SK-N-SH (cell line): ENCODE measurements at regions of chr5 and their contacts with region 1.

Region 1: DNA sequence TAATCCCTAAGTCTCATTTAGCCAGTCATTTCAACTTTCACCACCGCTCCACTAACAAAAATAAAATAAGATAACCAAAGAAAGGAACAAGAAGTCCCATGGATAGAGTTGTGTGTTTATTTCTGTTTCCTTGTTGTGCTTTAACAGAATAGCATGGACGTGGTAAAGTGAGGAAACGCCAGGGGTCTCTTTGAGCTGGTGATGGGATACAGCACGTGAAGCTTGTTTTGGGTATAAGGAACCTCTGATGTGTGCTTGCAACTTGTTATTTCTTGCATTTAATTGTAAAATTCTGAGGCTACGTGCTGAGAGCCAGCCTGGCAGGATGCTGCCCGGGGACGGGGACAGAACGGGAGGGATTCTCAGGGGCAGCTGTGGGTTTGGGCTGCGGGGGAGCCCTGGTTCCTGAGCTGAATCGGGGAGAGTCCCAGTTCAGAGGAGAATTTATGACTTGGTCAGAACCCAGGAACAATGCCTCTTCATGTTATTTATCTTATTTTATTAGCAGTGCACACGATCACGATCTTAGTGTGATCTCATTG is 63.4 kb downstream of the ANKRD33B start:
- DNase-seq: peak; percentile 64
- H3K4me3 ChIP-seq: peak overlapping the region; percentile 39 to 43
- H3K27ac ChIP-seq: peak overlapping the region; percentile 28 to 63; a peak in 2 of 4 replicates
- H3K4me1 ChIP-seq: peaks cover 0 to 7% of the 10 kb centered on the region in 2 experiments; a peak in 2 of 4 replicates
- H3K27me3 ChIP-seq: no peaks in the 10 kb centered on the region
- CTCF ChIP-seq: no peak
- EP300 ChIP-seq: no peak
- RAD21 ChIP-seq: no peak

Region 2: GRCh38 chr5:9951866-9952516 is 675.2 kb before region 1 on chr5:
- CTCF ChIA-PET with region 1: no interaction called
- POLR2A ChIA-PET with region 1: no interaction called
- DNase-seq: no peak
- H3K4me3 ChIP-seq: no peak overlapping the region
- H3K27ac ChIP-seq: no peak overlapping the region
- H3K4me1 ChIP-seq: peaks cover 0 to 17% of the 10 kb centered on the region in 2 experiments; a peak in 2 of 4 replicates
- H3K27me3 ChIP-seq: no peaks in the 10 kb centered on the region
- CTCF ChIP-seq: no peak
- EP300 ChIP-seq: no peak
- RAD21 ChIP-seq: no peak

Region 3: DNA sequence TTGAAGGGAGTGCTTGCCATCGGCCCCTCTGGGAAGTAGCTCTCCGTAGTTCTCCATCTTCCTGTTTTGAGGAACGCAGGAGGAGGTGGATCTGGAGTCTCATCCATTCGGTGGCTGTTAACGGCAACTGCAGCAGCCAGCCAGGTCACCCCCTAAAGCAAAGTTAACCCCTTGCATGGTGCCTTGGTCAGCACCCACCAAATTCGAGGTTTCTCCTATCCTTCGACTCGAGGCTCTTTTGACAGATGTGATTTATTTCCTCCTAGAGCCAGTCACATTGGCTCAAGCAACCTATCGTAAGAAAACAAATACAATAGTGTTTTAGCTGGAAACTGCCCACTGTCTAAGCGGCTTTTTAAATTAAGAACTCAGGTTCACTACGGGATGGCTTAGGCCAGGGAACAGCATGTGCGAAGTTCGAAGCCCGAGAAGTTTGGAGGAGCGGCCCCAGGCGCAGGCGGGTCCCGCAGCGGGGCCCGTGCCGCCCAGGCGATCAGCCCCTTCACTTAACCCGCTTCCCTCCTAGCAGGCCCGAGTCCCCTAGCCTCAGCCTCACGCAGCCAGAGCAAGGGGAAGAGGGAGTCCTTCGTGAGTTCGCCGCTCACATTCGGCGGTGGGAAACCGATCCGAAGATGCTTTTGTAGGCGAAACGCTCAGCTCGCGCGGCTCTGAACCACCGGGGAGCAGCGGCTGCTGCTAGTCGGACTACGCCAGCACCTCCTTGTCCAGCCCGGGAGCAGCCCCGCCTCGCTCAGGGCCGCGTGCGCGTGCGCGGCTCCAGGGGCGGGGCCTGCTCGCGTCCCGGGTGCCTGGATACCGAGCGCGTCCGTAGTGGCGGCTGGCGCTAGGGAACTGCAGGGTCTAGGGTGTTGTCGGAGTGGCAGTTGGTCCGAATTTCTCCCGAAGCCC is 185.9 kb before region 1 on chr5 and contains the start of gene ROPN1L:
- CTCF ChIA-PET with region 1: interaction called, 34 read pairs
- POLR2A ChIA-PET with region 1: no interaction called
- DNase-seq: peak; percentile 99
- H3K4me3 ChIP-seq: peak within 1 kb of the TSS; percentile 63 to 72
- H3K27ac ChIP-seq: peak within 1 kb of the TSS; percentile 70 to 84
- H3K4me1 ChIP-seq: peaks cover 0 to 8% of the 10 kb centered on the region in 2 experiments; a peak in 1 of 4 replicates
- H3K27me3 ChIP-seq: no peaks in the 10 kb centered on the region
- CTCF ChIP-seq: no peak
- EP300 ChIP-seq: no peak
- RAD21 ChIP-seq: no peak
- polyA plus RNA-seq, gene ROPN1L: 0.31 and 0.58 TPM in 2 replicates

Region 4: DNA sequence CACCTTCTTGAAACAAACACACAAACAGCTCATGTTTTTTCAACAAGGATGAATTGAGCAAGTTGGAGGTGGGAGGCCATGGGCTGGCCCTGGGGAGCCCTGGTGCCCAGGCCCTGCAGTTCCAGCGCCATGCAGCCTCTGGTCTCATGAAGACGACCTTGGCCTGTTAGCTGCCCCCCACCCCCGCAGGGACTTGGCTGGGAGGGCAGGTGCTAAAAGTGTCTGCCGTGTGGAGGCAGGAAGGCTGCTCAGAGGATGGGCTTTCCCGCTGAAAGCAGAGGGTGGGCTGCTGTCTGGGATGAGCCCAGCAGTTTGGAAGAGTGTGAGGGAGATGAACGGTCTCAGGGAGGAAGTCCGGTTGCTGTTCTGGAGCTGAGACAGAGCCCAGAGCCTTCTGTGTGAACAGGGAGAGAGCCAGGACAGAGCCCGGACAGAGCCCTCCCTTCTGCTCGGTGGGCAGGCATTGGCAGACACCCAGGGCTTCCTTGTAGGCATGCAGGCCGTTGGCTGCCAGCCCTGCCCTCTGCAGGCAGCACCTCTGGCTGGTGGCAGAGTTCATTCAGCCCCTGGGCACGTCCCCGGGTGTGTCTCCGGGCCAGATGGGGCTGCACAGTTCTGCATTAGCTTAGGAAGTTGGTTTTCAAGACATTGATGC is 166.9 kb before region 1 on chr5:
- CTCF ChIA-PET with region 1: interaction called, 265 read pairs
- POLR2A ChIA-PET with region 1: no interaction called
- DNase-seq: peak; percentile 59
- H3K4me3 ChIP-seq: no peak overlapping the region
- H3K27ac ChIP-seq: no peak overlapping the region; a peak in 1 of 4 replicates
- H3K4me1 ChIP-seq: peaks cover 0 to 21% of the 10 kb centered on the region in 2 experiments; a peak in 1 of 4 replicates
- H3K27me3 ChIP-seq: no peaks in the 10 kb centered on the region
- CTCF ChIP-seq: 0 out of 2 replicates have a peak, but pooled peaks have one; percentile 9
- EP300 ChIP-seq: no peak
- RAD21 ChIP-seq: no peak

Region 5: DNA sequence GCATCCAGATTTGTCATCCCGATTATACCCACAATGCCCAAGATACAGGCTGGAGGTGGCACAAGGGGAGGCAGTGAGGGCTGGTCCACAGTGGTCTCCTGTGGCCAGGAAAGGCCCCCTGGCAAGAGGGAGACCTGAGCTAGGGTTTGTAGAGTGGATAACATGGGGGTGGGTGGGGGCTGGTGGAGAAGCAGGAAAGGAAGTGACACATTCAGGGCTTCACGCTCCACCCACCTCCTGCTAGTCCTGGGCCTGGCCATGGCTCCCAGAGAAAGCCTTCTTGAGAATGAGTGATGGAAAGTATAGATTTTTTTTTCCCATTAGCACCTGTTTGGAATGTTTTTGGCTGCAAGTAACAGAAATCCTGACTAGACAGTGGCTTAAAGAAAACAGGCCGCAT is 17.9 kb after region 1 on chr5:
- CTCF ChIA-PET with region 1: interaction called, 16 read pairs
- POLR2A ChIA-PET with region 1: no interaction called
- DNase-seq: no peak
- H3K4me3 ChIP-seq: no peak overlapping the region
- H3K27ac ChIP-seq: no peak overlapping the region
- H3K4me1 ChIP-seq: no peaks in the 10 kb centered on the region; a peak in 1 of 4 replicates
- H3K27me3 ChIP-seq: no peaks in the 10 kb centered on the region
- CTCF ChIP-seq: no peak
- EP300 ChIP-seq: no peak
- RAD21 ChIP-seq: no peak